ENCODE measurements at regions of chr3 and their contacts with region 1.

Region 1: DNA sequence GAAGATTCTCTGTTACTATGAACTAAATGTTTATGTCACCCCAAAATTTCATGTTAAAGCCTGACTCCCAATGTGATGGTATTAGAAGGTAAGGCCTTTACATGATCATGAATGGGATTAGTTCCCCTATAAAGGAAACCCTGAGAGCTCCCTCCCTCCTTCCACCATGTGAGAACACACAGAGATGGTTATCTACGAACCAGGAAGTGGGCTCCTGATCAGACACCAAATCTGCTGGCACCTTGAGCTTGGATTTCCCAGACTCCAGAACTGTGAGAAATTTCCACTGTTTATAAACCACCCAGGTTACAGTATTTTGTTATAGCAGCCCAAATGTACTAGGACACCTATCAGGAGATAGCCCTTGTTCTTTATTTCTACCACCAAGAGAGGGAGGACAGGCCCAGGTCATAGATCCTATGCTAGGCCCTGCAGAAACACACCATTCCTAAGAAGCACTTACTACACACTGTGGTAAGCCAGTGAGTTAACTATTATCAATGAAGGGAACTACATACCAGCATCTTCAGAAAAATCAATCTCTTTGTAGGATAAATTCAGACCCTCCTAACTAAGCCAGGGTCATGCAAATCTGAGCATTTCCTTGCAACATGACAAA is 59.0 kb downstream of the PRKAR2A start:
- DNase-seq: no peak
- H3K4me3 ChIP-seq: no peak overlapping the region
- H3K4me3 Mint-ChIP-seq: no peak overlapping the region
- H3K27ac Mint-ChIP-seq: no peak overlapping the region
- H3K4me1 ChIP-seq: no peaks in the 10 kb centered on the region
- H3K4me1 Mint-ChIP-seq: no peaks in the 10 kb centered on the region
- H3K27me3 ChIP-seq: no peaks in the 10 kb centered on the region
- H3K27me3 Mint-ChIP-seq: no peaks in the 10 kb centered on the region
- CTCF ChIP-seq: no peak

Region 2: GRCh38 chr3:48635222-48636021 is 153.2 kb before region 1 on chr3 and contains the start of gene SLC26A6:
- CTCF ChIA-PET with region 1: no interaction called
- POLR2A ChIA-PET with region 1: no interaction called
- intact Hi-C with region 1: no loop called
- DNase-seq: peak; percentile 96 to 98
- H3K4me3 ChIP-seq: peak within 1 kb of the TSS; percentile 83
- H3K4me3 Mint-ChIP-seq: peak within 1 kb of the TSS; percentile 78
- H3K27ac Mint-ChIP-seq: peak within 1 kb of the TSS; percentile 59
- H3K4me1 ChIP-seq: peaks cover 19% of the 10 kb centered on the region
- H3K4me1 Mint-ChIP-seq: peaks cover 21% of the 10 kb centered on the region
- H3K27me3 ChIP-seq: no peaks in the 10 kb centered on the region
- H3K27me3 Mint-ChIP-seq: no peaks in the 10 kb centered on the region
- CTCF ChIP-seq: peak in 1 of 2 experiments; percentile 43
- total RNA-seq, gene SLC26A6: 54.7 and 59.4 TPM in 2 replicates

Region 3: GRCh38 chr3:48847504-48848423 is 59.1 kb after region 1 on chr3 and contains the start of gene PRKAR2A:
- CTCF ChIA-PET with region 1: interaction called, 15 read pairs
- POLR2A ChIA-PET with region 1: no interaction called
- intact Hi-C with region 1: no loop called
- DNase-seq: peak; percentile 78 to 89
- H3K4me3 ChIP-seq: peak within 1 kb of the TSS; percentile 72
- H3K4me3 Mint-ChIP-seq: peak within 1 kb of the TSS; percentile 92
- H3K27ac Mint-ChIP-seq: peak within 1 kb of the TSS; percentile 60
- H3K4me1 ChIP-seq: no peaks in the 10 kb centered on the region
- H3K4me1 Mint-ChIP-seq: no peaks in the 10 kb centered on the region
- H3K27me3 ChIP-seq: no peaks in the 10 kb centered on the region
- H3K27me3 Mint-ChIP-seq: no peaks in the 10 kb centered on the region
- CTCF ChIP-seq: no peak
- total RNA-seq, gene PRKAR2A: 56.3 and 67.3 TPM in 2 replicates

Measured in Caco-2 (cell line).